Psoas muscle (tissue), 8 donors: ENCODE measurements at regions of chr16 and their contacts with region 1.

Region 1: DNA sequence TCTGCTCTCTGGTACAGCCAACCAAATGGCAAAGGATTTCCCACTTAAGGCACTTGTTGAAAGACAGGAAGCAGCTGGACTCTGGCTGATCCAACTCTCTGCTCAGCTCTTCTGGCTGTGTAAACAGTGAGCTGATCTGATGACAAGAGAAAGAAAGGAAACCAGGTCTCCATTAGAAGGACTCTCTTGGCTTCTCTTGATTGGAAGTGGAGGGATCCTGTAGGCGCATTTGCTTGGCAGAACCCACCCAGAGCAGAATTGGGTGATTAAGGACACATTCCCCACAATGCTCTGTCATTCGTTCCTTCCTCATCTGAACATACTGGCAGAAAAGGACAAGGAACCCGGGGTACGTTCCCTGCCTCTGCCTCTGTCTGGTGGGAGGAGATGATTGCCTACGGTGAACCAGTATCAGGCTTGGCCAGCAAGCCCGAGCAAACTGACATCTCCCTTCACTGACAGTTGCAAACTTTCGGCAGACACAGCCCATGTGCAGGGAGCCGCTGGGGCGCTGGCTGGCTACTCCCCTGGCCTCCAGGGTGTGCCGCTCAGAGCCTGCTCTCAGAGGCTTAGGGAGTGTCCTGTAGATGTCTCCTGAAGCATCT is 29.1 kb downstream of the LDHD start:
- DNase-seq: peak in 1 of 2 donors; percentile 71
- ATAC-seq: peak; percentile 89 to 95 (median 92)
- H3K4me3 ChIP-seq: peak overlapping the region; percentile 46
- H3K27ac ChIP-seq: peak overlapping the region; percentile 85
- H3K4me1 ChIP-seq: peaks cover 68% of the 10 kb centered on the region
- H3K27me3 ChIP-seq: no peaks in the 10 kb centered on the region
- CTCF ChIP-seq: no peak

Region 2: GRCh38 chr16:75105306-75106061 is 18.0 kb after region 1 on chr16:
- intact Hi-C with region 1: loop called in 1 of 2 experiments (anchors 1 kb)
- DNase-seq: peak in 1 of 2 donors; percentile 72
- ATAC-seq: peak in 3 of 4 donors; percentile 16 to 57 (median 17)
- H3K4me3 ChIP-seq: no peak overlapping the region
- H3K27ac ChIP-seq: peak overlapping the region; percentile 95
- H3K4me1 ChIP-seq: peaks cover 57% of the 10 kb centered on the region
- H3K27me3 ChIP-seq: no peaks in the 10 kb centered on the region
- CTCF ChIP-seq: no peak

Region 3: DNA sequence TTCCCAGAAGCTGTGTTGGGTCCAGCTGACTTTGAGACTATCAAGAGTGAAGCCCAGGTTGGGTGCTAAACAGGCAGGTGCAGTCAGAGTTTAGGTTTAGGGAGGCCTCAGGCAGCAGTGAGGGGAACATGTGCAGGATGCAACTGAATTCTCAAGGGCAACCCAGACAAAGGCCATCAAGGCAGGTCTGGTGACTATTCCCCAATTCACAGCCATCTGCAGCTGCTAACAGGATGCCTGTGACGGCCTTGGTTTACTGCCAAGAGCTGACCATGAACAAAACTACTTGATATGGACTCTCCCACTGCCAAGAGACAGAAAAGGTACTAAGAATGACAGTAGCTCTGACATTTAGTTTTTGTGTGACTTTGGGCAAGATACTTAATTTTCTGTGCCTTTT is 209.1 kb after region 1 on chr16:
- intact Hi-C with region 1: no loop called
- DNase-seq: no peak
- ATAC-seq: peak; percentile 63 to 82 (median 66)
- H3K4me3 ChIP-seq: no peak overlapping the region
- H3K27ac ChIP-seq: peak overlapping the region; percentile 30
- H3K4me1 ChIP-seq: peaks cover 6% of the 10 kb centered on the region
- H3K27me3 ChIP-seq: no peaks in the 10 kb centered on the region
- CTCF ChIP-seq: no peak